Activated CD4-positive, alpha-beta T cell treated with anti-CD3 and anti-CD28 coated beads, Interleukin-2, amount 10 ng/mL, durations not matched to agents 24 days and 14 days (primary cell): ENCODE measurements at regions of chr19 and their contacts with region 1.

Region 1: GRCh38 chr19:42512743-42513304 is 15.5 kb downstream of the CEACAM1 start:
- DNase-seq: no peak
- H3K4me3 Mint-ChIP-seq: peak overlapping the region; percentile 43
- H3K27ac Mint-ChIP-seq: peak overlapping the region; percentile 72
- H3K4me1 Mint-ChIP-seq: peaks cover 33% of the 10 kb centered on the region
- H3K27me3 Mint-ChIP-seq: no peaks in the 10 kb centered on the region

Region 2: GRCh38 chr19:42092350-42092749 is 420.5 kb before region 1 on chr19:
- intact Hi-C with region 1: no loop called
- DNase-seq: peak; percentile 87
- H3K4me3 Mint-ChIP-seq: peak overlapping the region; percentile 45
- H3K27ac Mint-ChIP-seq: peak overlapping the region; percentile 78
- H3K4me1 Mint-ChIP-seq: peaks cover 30% of the 10 kb centered on the region
- H3K27me3 Mint-ChIP-seq: no peaks in the 10 kb centered on the region

Region 3: GRCh38 chr19:42450314-42450934 is 62.4 kb before region 1 on chr19:
- intact Hi-C with region 1: loop called (anchors 1 kb)
- DNase-seq: peak; percentile 93
- H3K4me3 Mint-ChIP-seq: no peak overlapping the region
- H3K27ac Mint-ChIP-seq: no peak overlapping the region
- H3K4me1 Mint-ChIP-seq: peaks cover 15% of the 10 kb centered on the region
- H3K27me3 Mint-ChIP-seq: peaks cover 2% of the 10 kb centered on the region

Region 4: GRCh38 chr19:42467183-42467760 is 45.6 kb before region 1 on chr19:
- intact Hi-C with region 1: loop called (anchors 1 kb)
- DNase-seq: no peak
- H3K4me3 Mint-ChIP-seq: peak overlapping the region; percentile 27
- H3K27ac Mint-ChIP-seq: peak overlapping the region; percentile 75
- H3K4me1 Mint-ChIP-seq: peaks cover 32% of the 10 kb centered on the region
- H3K27me3 Mint-ChIP-seq: no peaks in the 10 kb centered on the region

Region 5: GRCh38 chr19:42529248-42529764 is 16.5 kb after region 1 on chr19:
- intact Hi-C with region 1: loop called (anchors 2 kb)
- DNase-seq: peak; percentile 93
- H3K4me3 Mint-ChIP-seq: peak overlapping the region; percentile 84
- H3K27ac Mint-ChIP-seq: peak overlapping the region; percentile 88
- H3K4me1 Mint-ChIP-seq: peaks cover 42% of the 10 kb centered on the region
- H3K27me3 Mint-ChIP-seq: peaks cover 4% of the 10 kb centered on the region